ENCODE measurements at regions of chr4 and their contacts with region 1.

Region 1: GRCh38 chr4:163042306-163042705 is 124.4 kb downstream of the NAF1 start:
- DNase-seq: no peak
- H3K4me3 ChIP-seq: no peak overlapping the region
- H3K4me3 Mint-ChIP-seq: no peak overlapping the region
- H3K27ac Mint-ChIP-seq: no peak overlapping the region
- H3K4me1 ChIP-seq: no peaks in the 10 kb centered on the region
- H3K4me1 Mint-ChIP-seq: no peaks in the 10 kb centered on the region
- H3K27me3 ChIP-seq: no peaks in the 10 kb centered on the region
- H3K27me3 Mint-ChIP-seq: no peaks in the 10 kb centered on the region
- CTCF ChIP-seq: no peak

Region 2: DNA sequence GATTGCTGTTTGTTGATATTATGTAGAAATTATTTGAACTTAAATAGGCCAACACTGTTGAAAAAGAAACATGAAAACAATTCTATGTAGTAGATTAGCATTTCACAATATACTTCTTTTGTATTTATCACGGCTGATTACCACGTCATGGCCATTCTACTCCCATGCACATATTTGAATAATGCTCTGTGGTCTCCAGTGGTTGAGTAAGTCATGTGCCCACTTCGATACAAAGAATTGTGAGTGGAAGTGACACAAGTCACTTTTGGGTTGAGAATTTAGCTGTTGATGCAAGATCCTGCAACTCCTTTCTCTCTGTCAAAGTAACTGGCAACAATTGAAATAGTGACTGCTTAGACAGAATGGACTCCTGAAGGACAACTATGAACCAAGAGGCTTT is 871.8 kb before region 1 on chr4:
- CTCF ChIA-PET with region 1: no interaction called
- POLR2A ChIA-PET with region 1: no interaction called
- intact Hi-C with region 1: loop called (anchors 10 kb)
- DNase-seq: no peak
- H3K4me3 ChIP-seq: no peak overlapping the region
- H3K4me3 Mint-ChIP-seq: no peak overlapping the region
- H3K27ac Mint-ChIP-seq: no peak overlapping the region
- H3K4me1 ChIP-seq: no peaks in the 10 kb centered on the region
- H3K4me1 Mint-ChIP-seq: no peaks in the 10 kb centered on the region
- H3K27me3 ChIP-seq: no peaks in the 10 kb centered on the region
- H3K27me3 Mint-ChIP-seq: no peaks in the 10 kb centered on the region
- CTCF ChIP-seq: no peak

Region 3: DNA sequence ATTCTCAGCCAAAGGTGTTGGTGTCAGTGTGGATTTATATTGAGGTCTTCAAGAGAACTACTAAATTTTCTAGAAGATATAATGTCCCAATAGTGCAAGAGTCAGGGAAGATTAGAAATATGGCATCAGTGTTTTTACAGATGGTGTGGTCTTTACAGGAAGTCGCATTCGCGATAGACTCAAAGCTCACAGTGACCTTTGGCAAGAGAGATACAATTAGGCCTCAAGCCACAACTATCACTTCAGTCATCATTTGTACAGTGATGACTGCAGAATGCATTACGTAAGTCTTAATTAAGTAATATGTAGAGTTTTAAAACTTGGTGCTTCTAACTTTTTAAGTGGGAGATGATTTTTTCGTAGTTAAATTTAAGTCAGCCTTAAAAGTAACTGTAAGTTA is 641.3 kb before region 1 on chr4:
- CTCF ChIA-PET with region 1: no interaction called
- POLR2A ChIA-PET with region 1: no interaction called
- intact Hi-C with region 1: no loop called
- DNase-seq: no peak
- H3K4me3 ChIP-seq: no peak overlapping the region
- H3K4me3 Mint-ChIP-seq: no peak overlapping the region
- H3K27ac Mint-ChIP-seq: no peak overlapping the region
- H3K4me1 ChIP-seq: peaks cover under 1% of the 10 kb centered on the region
- H3K4me1 Mint-ChIP-seq: no peaks in the 10 kb centered on the region
- H3K27me3 ChIP-seq: no peaks in the 10 kb centered on the region
- H3K27me3 Mint-ChIP-seq: no peaks in the 10 kb centered on the region
- CTCF ChIP-seq: no peak

Region 4: DNA sequence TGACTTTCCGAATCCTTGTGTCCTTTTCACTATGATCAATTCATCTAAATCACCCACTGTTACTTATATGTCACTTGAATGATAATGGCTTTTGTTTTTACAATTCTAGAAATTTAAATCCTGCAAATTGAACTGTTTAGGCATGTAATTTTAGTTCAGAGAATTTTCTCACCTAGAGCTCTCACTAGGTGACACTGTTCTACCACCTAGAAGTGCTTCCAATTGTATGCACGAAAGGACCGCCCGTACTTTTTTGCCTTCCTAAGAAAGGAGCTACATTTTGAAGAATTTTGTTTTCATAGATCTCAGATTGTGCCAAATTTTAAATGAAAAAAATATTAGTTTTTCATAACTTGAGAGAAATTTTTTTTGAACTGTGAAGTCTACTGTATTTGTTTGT is 396.9 kb before region 1 on chr4:
- CTCF ChIA-PET with region 1: interaction called, 3 read pairs
- POLR2A ChIA-PET with region 1: no interaction called
- intact Hi-C with region 1: loop called (anchors 1 kb)
- DNase-seq: peak in 1 of 2 experiments; percentile 19
- H3K4me3 ChIP-seq: no peak overlapping the region
- H3K4me3 Mint-ChIP-seq: no peak overlapping the region
- H3K27ac Mint-ChIP-seq: no peak overlapping the region
- H3K4me1 ChIP-seq: no peaks in the 10 kb centered on the region
- H3K4me1 Mint-ChIP-seq: no peaks in the 10 kb centered on the region
- H3K27me3 ChIP-seq: no peaks in the 10 kb centered on the region
- H3K27me3 Mint-ChIP-seq: peaks cover 3% of the 10 kb centered on the region
- CTCF ChIP-seq: peak; percentile 26 to 76

Region 5: GRCh38 chr4:162770761-162771490 is 271.4 kb before region 1 on chr4:
- CTCF ChIA-PET with region 1: no interaction called
- POLR2A ChIA-PET with region 1: no interaction called
- intact Hi-C with region 1: loop called (anchors 10 kb)
- DNase-seq: no peak
- H3K4me3 ChIP-seq: no peak overlapping the region
- H3K4me3 Mint-ChIP-seq: no peak overlapping the region
- H3K27ac Mint-ChIP-seq: no peak overlapping the region
- H3K4me1 ChIP-seq: no peaks in the 10 kb centered on the region
- H3K4me1 Mint-ChIP-seq: no peaks in the 10 kb centered on the region
- H3K27me3 ChIP-seq: no peaks in the 10 kb centered on the region
- H3K27me3 Mint-ChIP-seq: no peaks in the 10 kb centered on the region
- CTCF ChIP-seq: no peak

Region 6: GRCh38 chr4:162847945-162848549 is 194.3 kb before region 1 on chr4:
- CTCF ChIA-PET with region 1: no interaction called
- POLR2A ChIA-PET with region 1: no interaction called
- intact Hi-C with region 1: loop called (anchors 10 kb)
- DNase-seq: no peak
- H3K4me3 ChIP-seq: no peak overlapping the region
- H3K4me3 Mint-ChIP-seq: no peak overlapping the region
- H3K27ac Mint-ChIP-seq: no peak overlapping the region
- H3K4me1 ChIP-seq: no peaks in the 10 kb centered on the region
- H3K4me1 Mint-ChIP-seq: no peaks in the 10 kb centered on the region
- H3K27me3 ChIP-seq: no peaks in the 10 kb centered on the region
- H3K27me3 Mint-ChIP-seq: no peaks in the 10 kb centered on the region
- CTCF ChIP-seq: no peak

Region 7: DNA sequence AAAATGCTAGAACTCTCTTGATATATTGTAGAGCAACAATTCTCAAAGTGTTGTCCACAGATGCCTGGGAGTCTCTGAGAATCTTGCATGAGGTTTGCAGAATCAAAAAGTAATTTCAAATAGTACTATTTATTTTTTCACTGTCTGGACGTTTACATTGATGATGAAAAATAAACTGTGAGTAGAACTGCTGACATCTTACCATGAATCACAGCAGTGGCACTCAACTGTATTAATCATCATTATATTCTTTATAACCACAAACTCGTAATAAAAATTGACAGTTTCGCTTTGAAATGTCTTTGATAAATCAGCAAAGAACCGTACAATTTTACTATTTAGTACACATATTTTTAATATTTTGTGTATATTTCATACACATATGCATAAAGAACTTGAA is 29.9 kb after region 1 on chr4:
- CTCF ChIA-PET with region 1: no interaction called
- POLR2A ChIA-PET with region 1: no interaction called
- intact Hi-C with region 1: no loop called
- DNase-seq: no peak
- H3K4me3 ChIP-seq: no peak overlapping the region
- H3K4me3 Mint-ChIP-seq: no peak overlapping the region
- H3K27ac Mint-ChIP-seq: no peak overlapping the region
- H3K4me1 ChIP-seq: peaks cover 10% of the 10 kb centered on the region; the same call in 1 of the 2 replicates
- H3K4me1 Mint-ChIP-seq: peaks cover 7% of the 10 kb centered on the region
- H3K27me3 ChIP-seq: no peaks in the 10 kb centered on the region
- H3K27me3 Mint-ChIP-seq: no peaks in the 10 kb centered on the region
- CTCF ChIP-seq: no peak

Region 8: DNA sequence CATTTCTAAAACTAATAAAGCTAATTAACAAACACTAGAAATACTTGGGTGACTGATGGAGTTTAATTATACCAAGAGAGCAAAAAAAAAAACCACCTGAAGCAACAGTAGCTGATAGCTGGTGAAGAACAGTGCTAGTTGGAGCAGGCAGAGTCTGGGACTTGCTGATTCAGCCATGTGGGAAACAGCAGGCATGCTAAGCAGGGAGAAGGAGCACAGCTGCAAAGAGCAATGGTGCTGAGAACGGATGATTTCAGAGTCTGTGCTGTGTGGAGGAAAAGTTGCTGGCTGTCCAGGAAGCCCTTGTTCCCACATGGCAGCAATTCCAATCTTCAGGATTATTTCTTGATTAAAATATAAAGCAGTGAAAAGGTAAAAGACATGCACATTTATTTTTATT is 221.3 kb after region 1 on chr4:
- CTCF ChIA-PET with region 1: no interaction called
- POLR2A ChIA-PET with region 1: no interaction called
- intact Hi-C with region 1: no loop called
- DNase-seq: no peak
- H3K4me3 ChIP-seq: no peak overlapping the region
- H3K4me3 Mint-ChIP-seq: no peak overlapping the region
- H3K27ac Mint-ChIP-seq: no peak overlapping the region
- H3K4me1 ChIP-seq: no peaks in the 10 kb centered on the region
- H3K4me1 Mint-ChIP-seq: no peaks in the 10 kb centered on the region
- H3K27me3 ChIP-seq: no peaks in the 10 kb centered on the region
- H3K27me3 Mint-ChIP-seq: peaks cover 5% of the 10 kb centered on the region
- CTCF ChIP-seq: no peak

Measured in Caco-2 (cell line).